Caco-2 (cell line): ENCODE measurements at regions of chr12 and their contacts with region 1.

Region 1: GRCh38 chr12:75666939-75667334 is 155.5 kb upstream of the KRR1 start:
- DNase-seq: peak in 1 of 2 experiments; percentile 33
- H3K4me3 ChIP-seq: no peak overlapping the region
- H3K4me3 Mint-ChIP-seq: peak overlapping the region; percentile 25
- H3K27ac Mint-ChIP-seq: peak overlapping the region; percentile 31
- H3K4me1 ChIP-seq: peaks cover 37% of the 10 kb centered on the region
- H3K4me1 Mint-ChIP-seq: peaks cover 25% of the 10 kb centered on the region
- H3K27me3 ChIP-seq: no peaks in the 10 kb centered on the region
- H3K27me3 Mint-ChIP-seq: no peaks in the 10 kb centered on the region
- CTCF ChIP-seq: no peak

Region 2: DNA sequence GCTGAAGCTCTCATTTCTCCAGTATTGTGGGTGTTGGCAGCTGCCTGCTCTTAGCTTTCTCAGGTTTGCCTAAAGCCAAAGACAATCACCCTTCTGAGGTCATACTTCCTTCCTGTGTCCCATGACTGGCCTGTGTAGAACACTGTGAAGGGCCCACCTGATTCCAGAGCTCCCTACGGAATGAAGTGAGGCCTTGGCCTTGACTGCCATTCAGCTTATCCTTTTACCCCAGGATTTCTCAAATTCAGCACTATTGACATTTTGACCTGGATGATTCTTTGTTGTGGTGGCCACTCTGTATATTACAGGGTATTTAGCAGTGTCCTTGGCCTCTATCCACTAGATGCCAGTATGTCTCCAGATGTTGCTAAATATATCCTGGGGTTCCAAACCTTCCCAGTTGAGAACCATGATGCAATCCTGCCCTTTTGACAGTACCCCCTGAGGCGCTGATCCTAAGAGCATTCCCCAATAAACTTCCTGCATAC is 43.3 kb before region 1 on chr12:
- CTCF ChIA-PET with region 1: no interaction called
- POLR2A ChIA-PET with region 1: no interaction called
- intact Hi-C with region 1: loop called (anchors 5 kb)
- DNase-seq: peak; percentile 46 to 50
- H3K4me3 ChIP-seq: no peak overlapping the region
- H3K4me3 Mint-ChIP-seq: no peak overlapping the region
- H3K27ac Mint-ChIP-seq: peak overlapping the region; percentile 76
- H3K4me1 ChIP-seq: peaks cover 17% of the 10 kb centered on the region
- H3K4me1 Mint-ChIP-seq: peaks cover 20% of the 10 kb centered on the region
- H3K27me3 ChIP-seq: no peaks in the 10 kb centered on the region
- H3K27me3 Mint-ChIP-seq: no peaks in the 10 kb centered on the region
- CTCF ChIP-seq: peak; percentile 20 to 51

Region 3: DNA sequence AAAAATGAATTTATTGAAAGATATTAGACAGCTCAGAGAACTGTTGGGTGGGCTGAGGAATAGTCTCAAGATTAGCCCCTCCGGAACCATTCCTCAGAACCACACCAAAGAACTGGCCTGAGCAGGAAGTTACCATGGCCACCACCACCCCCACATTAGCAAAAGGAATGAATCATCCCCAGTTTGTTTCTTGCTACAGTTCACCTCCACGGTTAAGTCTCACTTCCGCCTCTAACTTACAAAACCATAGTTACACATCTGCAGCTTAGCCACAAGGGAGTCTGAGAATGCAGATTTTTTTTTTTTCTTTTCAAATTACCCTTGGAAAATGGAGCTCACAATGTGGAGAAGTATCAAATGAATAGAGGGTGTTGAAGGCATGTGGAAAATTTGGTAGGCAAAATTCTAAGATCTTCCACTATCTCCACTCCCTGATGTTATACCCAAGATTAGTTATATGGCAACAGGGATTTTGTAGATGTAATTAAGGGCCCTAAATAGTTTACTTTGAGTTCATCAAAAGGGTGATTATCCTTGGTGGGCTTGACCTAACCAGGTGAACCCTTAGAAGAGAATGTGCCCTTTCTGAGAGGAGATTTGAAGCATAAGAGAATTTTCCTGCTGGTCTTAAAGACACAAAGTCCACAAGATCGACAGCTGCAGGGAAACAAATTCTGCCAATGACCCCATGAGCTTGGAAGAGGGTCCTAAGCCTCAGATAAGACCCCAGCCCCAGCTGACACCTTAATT is 25.7 kb before region 1 on chr12:
- CTCF ChIA-PET with region 1: no interaction called
- POLR2A ChIA-PET with region 1: no interaction called
- intact Hi-C with region 1: loop called (anchors 2 kb)
- DNase-seq: peak in 1 of 2 experiments; percentile 4
- H3K4me3 ChIP-seq: no peak overlapping the region
- H3K4me3 Mint-ChIP-seq: no peak overlapping the region
- H3K27ac Mint-ChIP-seq: no peak overlapping the region
- H3K4me1 ChIP-seq: 0 out of 2 replicates have a peak, but pooled peaks cover 9% of the 10 kb centered on the region
- H3K4me1 Mint-ChIP-seq: peaks cover 20% of the 10 kb centered on the region
- H3K27me3 ChIP-seq: no peaks in the 10 kb centered on the region
- H3K27me3 Mint-ChIP-seq: no peaks in the 10 kb centered on the region
- CTCF ChIP-seq: no peak

Region 4: DNA sequence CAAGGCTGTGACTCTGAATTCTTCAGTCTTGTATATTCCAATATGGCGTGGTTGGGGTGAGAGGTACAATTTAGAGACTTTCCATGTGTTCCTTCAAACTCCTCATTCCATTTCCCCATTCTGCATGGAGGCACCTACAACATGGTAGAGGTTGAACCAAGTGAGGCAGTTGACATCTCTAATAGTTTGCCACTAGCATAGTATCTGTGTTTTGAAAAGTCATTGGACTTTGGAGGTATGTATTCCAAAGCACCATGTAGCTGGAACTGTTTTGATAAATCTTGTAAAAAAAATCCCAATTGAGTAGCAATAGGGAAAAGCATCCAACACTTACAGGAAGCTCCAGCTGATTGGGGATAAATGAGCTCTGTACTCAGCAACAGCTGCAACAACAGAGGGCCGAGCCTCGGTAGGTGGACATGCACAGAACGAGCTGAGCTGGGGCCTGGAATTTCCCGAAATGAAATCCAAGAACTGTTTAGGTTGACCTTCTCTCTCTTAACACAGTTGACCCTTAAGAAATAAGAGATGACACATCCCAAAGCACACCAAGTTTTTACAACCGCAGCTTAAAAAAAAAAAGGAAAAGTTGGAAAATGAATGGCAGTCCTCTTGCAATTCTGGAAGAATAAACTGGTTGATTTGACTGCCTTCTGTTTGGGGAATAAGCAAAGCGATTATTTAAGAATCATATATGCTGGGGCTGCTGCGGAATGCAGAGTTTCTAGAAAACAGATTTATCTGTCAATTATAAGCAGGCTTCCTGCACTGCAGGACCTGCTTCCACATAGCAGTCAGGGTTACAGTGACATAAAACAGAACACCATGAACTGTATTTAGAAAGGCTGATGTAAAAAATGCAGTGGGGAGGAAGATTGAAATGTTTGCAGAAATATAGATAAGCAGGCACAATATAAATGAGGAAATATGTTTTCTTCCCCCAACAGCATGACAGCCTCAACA is 39.1 kb after region 1 on chr12:
- CTCF ChIA-PET with region 1: no interaction called
- POLR2A ChIA-PET with region 1: no interaction called
- intact Hi-C with region 1: no loop called
- DNase-seq: no peak
- H3K4me3 ChIP-seq: no peak overlapping the region
- H3K4me3 Mint-ChIP-seq: no peak overlapping the region
- H3K27ac Mint-ChIP-seq: no peak overlapping the region
- H3K4me1 ChIP-seq: peaks cover 5% of the 10 kb centered on the region; the same call in 1 of the 2 replicates
- H3K4me1 Mint-ChIP-seq: peaks cover 10% of the 10 kb centered on the region
- H3K27me3 ChIP-seq: no peaks in the 10 kb centered on the region
- H3K27me3 Mint-ChIP-seq: no peaks in the 10 kb centered on the region
- CTCF ChIP-seq: no peak

Region 5: GRCh38 chr12:75722714-75723200 is 55.8 kb after region 1 on chr12:
- CTCF ChIA-PET with region 1: interaction called, 3 read pairs
- POLR2A ChIA-PET with region 1: no interaction called
- intact Hi-C with region 1: loop called (anchors 2 kb)
- DNase-seq: no peak
- H3K4me3 ChIP-seq: no peak overlapping the region
- H3K4me3 Mint-ChIP-seq: no peak overlapping the region
- H3K27ac Mint-ChIP-seq: peak overlapping the region; percentile 68
- H3K4me1 ChIP-seq: peaks cover 62% of the 10 kb centered on the region
- H3K4me1 Mint-ChIP-seq: peaks cover 50% of the 10 kb centered on the region
- H3K27me3 ChIP-seq: no peaks in the 10 kb centered on the region
- H3K27me3 Mint-ChIP-seq: no peaks in the 10 kb centered on the region
- CTCF ChIP-seq: no peak

Region 6: DNA sequence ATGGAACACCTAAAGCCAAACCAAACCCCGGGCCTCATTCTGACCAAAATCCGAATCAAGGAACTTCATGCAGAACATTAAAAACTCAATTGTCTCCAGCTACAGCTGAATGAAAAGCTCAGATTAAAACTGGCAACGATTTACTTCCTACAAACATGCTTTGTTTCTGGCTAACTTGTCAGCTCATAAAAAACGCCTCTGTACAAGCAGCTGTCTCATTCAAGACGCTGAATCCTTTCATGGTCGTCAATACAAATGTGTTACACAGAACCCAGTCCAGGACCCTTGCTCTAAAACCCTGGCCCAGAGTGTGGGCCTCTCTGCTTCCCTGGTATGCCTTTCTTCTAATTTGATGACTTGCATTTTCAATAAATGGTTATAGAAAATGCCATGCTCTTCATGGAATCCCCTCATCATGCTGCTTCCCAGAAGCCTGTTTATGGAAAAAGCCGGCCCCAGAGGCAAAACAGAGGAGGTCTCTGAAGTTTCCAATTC is 181.5 kb after region 1 on chr12:
- CTCF ChIA-PET with region 1: interaction called, 10 read pairs
- POLR2A ChIA-PET with region 1: no interaction called
- intact Hi-C with region 1: no loop called
- DNase-seq: no peak
- H3K4me3 ChIP-seq: no peak overlapping the region
- H3K4me3 Mint-ChIP-seq: no peak overlapping the region
- H3K27ac Mint-ChIP-seq: no peak overlapping the region
- H3K4me1 ChIP-seq: no peaks in the 10 kb centered on the region
- H3K4me1 Mint-ChIP-seq: peaks cover 22% of the 10 kb centered on the region
- H3K27me3 ChIP-seq: no peaks in the 10 kb centered on the region
- H3K27me3 Mint-ChIP-seq: no peaks in the 10 kb centered on the region
- CTCF ChIP-seq: no peak

Region 7: GRCh38 chr12:76024102-76024781 is 357.3 kb after region 1 on chr12:
- CTCF ChIA-PET with region 1: interaction called, 10 read pairs
- POLR2A ChIA-PET with region 1: no interaction called
- intact Hi-C with region 1: no loop called
- DNase-seq: no peak
- H3K4me3 ChIP-seq: no peak overlapping the region
- H3K4me3 Mint-ChIP-seq: no peak overlapping the region
- H3K27ac Mint-ChIP-seq: no peak overlapping the region
- H3K4me1 ChIP-seq: peaks cover 29% of the 10 kb centered on the region
- H3K4me1 Mint-ChIP-seq: peaks cover 11% of the 10 kb centered on the region
- H3K27me3 ChIP-seq: no peaks in the 10 kb centered on the region
- H3K27me3 Mint-ChIP-seq: no peaks in the 10 kb centered on the region
- CTCF ChIP-seq: no peak